Activated B cell treated with CpG ODN at 0.5 μM for 24 hours (primary cell): ENCODE measurements at regions of chr1 and their contacts with region 1.

Region 1: GRCh38 chr1:63705078-63705477 is 68.7 kb upstream of the ROR1 start:
- DNase-seq: no peak
- ATAC-seq: no peak
- H3K4me3 Mint-ChIP-seq: no peak overlapping the region
- H3K27ac Mint-ChIP-seq: no peak overlapping the region
- H3K4me1 Mint-ChIP-seq: peaks cover 1% of the 10 kb centered on the region
- H3K27me3 Mint-ChIP-seq: peaks cover 13% of the 10 kb centered on the region
- CTCF ChIP-seq: no peak

Region 2: DNA sequence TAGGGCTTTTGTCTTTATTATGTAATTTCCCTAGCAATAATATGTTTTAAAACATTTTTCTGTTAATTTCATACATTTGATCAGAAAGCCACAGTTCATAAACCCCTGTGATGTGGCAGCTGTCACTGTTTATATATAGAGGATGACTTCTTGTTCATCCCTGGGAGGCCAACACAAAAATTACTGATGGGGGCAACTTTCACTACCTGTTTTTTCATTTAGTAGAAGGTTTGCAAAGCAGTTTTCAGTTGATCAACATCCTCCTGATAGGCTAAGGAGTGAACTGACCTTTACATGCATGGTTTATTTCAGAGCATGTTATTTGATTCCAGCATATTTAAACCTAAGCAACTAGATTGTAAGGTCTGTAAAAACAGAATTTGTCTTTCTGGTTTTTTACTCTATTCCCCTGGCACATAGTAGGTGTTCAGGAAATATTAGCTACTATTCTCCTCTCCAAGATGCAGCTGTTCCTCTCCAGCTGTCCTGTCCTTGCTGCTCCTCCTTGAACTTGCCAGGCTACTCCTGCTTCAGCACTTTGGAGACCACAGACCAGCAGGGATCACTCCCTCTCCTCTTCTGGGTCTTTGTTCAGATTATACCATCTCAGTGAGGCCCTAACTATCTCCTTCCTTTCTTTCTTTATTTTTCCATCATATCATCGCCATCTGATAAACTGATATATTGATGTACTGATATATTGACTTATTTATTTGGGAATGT is 123.4 kb after region 1 on chr1:
- CTCF ChIA-PET with region 1: no interaction called
- POLR2A ChIA-PET with region 1: no interaction called
- intact Hi-C with region 1: loop called (anchors 5 kb)
- DNase-seq: no peak
- ATAC-seq: peak; percentile 86
- H3K4me3 Mint-ChIP-seq: no peak overlapping the region
- H3K27ac Mint-ChIP-seq: peak overlapping the region; percentile 20
- H3K4me1 Mint-ChIP-seq: peaks cover 46% of the 10 kb centered on the region
- H3K27me3 Mint-ChIP-seq: no peaks in the 10 kb centered on the region
- CTCF ChIP-seq: no peak